HCT116 (cell line): ENCODE measurements at regions of chr4 and their contacts with region 1.

Region 1: GRCh38 chr4:103915224-103915869 is 195.6 kb upstream of the TACR3 start:
- DNase-seq: peak; percentile 19
- ATAC-seq: peak; percentile 59; the same call in 1 of the 2 replicates
- H3K4me3 ChIP-seq: no peak overlapping the region
- H3K27ac ChIP-seq: no peak overlapping the region
- H3K4me1 ChIP-seq: no peaks in the 10 kb centered on the region
- H3K27me3 ChIP-seq: no peaks in the 10 kb centered on the region
- CTCF ChIP-seq: peak; percentile 54 to 77 (median 73); a peak in 5 of 6 replicates
- POLR2A ChIP-seq: no peak
- RAD21 ChIP-seq: peak; percentile 76

Region 2: DNA sequence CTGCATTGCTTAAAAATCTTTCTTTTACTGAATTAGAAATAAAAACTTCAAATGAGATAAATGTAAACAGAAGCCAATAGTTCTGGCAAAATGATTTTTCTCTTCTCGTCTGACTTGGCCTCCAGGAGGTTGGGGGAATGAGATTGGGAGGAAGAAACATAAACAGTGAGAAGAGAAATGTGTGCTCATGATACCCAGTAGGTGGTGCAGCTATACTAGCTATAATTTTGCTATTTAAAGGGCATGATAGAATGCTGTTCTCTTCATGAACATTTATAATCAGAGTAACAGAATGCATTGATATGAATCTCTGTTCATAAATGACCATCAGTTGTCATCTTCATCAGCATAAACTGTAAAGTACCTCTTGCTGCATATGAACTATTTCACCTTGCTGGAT is 281.1 kb before region 1 on chr4:
- CTCF ChIA-PET with region 1: interaction called, 4 read pairs
- POLR2A ChIA-PET with region 1: no interaction called
- RAD21 ChIA-PET with region 1: no interaction called
- intact Hi-C with region 1: loop called (anchors 10 kb)
- DNase-seq: peak; percentile 10
- ATAC-seq: 0 out of 2 replicates have a peak, but pooled peaks have one; percentile 46
- H3K4me3 ChIP-seq: no peak overlapping the region
- H3K27ac ChIP-seq: no peak overlapping the region
- H3K4me1 ChIP-seq: no peaks in the 10 kb centered on the region
- H3K27me3 ChIP-seq: no peaks in the 10 kb centered on the region
- CTCF ChIP-seq: peak; percentile 30 to 40 (median 37); a peak in 4 of 6 replicates
- POLR2A ChIP-seq: no peak
- RAD21 ChIP-seq: peak; percentile 65